ENCODE measurements at regions of chr12 and their contacts with region 1.

Region 1: GRCh38 chr12:111046896-111047295 is 126.5 kb upstream of the MYL2 start:
- DNase-seq: no peak
- ATAC-seq: no peak
- H3K4me3 Mint-ChIP-seq: no peak overlapping the region
- H3K27ac Mint-ChIP-seq: no peak overlapping the region
- H3K4me1 Mint-ChIP-seq: no peaks in the 10 kb centered on the region
- H3K27me3 Mint-ChIP-seq: no peaks in the 10 kb centered on the region

Region 2: GRCh38 chr12:111033281-111034082 is 13.4 kb before region 1 on chr12:
- CTCF ChIA-PET with region 1: no interaction called
- POLR2A ChIA-PET with region 1: interaction called, 10 read pairs
- intact Hi-C with region 1: loop called in 1 of 2 experiments (anchors 1 kb)
- DNase-seq: peak; percentile 44
- ATAC-seq: no peak
- H3K4me3 Mint-ChIP-seq: peak overlapping the region; percentile 49
- H3K27ac Mint-ChIP-seq: no peak overlapping the region
- H3K4me1 Mint-ChIP-seq: peaks cover 19% of the 10 kb centered on the region
- H3K27me3 Mint-ChIP-seq: peaks cover 52% of the 10 kb centered on the region